Vagina (tissue), 2 donors: ENCODE measurements at regions of chr5 and their contacts with region 1.

Region 1: DNA sequence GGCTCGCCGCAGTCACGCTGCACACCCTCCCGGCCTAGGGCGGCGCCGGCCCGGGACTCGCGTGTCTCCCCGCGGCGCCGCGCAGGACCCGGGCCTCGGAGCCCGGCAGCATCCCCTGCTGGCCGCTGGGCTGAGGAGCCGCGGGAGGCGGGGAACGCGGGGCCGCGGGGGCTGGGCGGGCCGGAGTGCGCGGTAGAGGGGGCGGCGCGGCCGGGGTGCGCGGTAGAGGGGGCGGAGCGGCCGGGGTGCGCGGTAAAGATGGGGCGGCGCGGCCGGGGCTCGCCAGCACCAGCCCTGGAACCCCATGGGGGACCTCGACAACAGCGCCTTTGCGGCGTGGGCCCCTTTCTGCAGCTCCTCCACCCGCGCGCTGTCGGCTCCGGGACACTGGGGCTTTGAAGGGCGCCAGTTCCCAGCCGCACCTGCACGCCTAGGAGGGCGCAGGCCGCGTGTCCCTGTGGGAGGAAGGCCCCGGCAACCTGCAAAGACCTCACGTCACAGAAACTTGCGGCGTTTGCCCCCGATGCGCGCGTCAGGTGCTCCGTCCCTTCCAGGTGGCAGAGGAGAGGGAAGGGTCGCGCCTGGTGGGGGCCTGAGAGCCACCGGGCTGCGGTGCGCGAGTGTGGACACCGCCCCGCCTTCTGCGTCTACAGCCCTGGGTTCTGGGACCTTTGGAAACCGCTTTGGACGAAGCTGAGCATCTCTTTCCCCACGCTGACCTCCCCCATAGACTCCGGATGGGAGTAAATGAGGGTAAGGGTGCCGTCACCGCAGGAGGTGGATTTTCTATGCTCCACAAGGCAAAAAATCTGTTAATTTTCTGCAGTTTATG is 49.6 kb downstream of the NSUN2 start:
- DNase-seq: peak; percentile 62 to 70
- H3K4me3 ChIP-seq: peak overlapping the region; percentile 40 to 56
- H3K27ac ChIP-seq: no peak overlapping the region
- H3K4me1 ChIP-seq: peaks cover 15% of the 10 kb centered on the region
- H3K27me3 ChIP-seq: no peaks in the 10 kb centered on the region
- CTCF ChIP-seq: no peak
- POLR2A ChIP-seq: no peak

Region 2: DNA sequence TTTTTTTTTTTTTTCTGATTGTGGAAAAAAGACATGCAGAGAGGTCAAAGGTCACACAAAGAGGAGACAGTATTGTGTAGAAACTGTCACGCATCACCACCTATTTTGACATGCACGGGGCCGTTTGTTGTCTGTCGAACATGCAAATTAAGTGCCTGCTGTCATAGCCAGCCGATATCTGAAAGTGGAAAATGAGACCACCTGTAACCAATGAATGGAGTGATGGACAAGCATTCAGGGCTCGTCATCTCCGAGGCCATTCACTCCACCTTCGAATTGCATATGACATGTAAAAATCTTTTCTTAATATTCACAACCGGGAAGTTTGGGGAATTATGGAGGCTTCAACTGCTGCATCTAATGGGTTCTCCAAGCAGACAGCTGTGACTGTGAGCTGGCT is 1955.3 kb before region 1 on chr5:
- intact Hi-C with region 1: no loop called
- DNase-seq: no peak
- H3K4me3 ChIP-seq: no peak overlapping the region
- H3K27ac ChIP-seq: no peak overlapping the region
- H3K4me1 ChIP-seq: no peaks in the 10 kb centered on the region
- H3K27me3 ChIP-seq: no peaks in the 10 kb centered on the region
- CTCF ChIP-seq: no peak
- POLR2A ChIP-seq: no peak

Region 3: GRCh38 chr5:5497152-5497748 is 1086.0 kb before region 1 on chr5:
- intact Hi-C with region 1: loop called (anchors 5 kb)
- DNase-seq: no peak
- H3K4me3 ChIP-seq: no peak overlapping the region
- H3K27ac ChIP-seq: no peak overlapping the region
- H3K4me1 ChIP-seq: peaks cover 9% of the 10 kb centered on the region
- H3K27me3 ChIP-seq: no peaks in the 10 kb centered on the region
- CTCF ChIP-seq: peak; percentile 3 to 44 (median 36)
- POLR2A ChIP-seq: no peak

Region 4: GRCh38 chr5:6659941-6660684 is 76.8 kb after region 1 on chr5:
- intact Hi-C with region 1: no loop called
- DNase-seq: no peak
- H3K4me3 ChIP-seq: no peak overlapping the region
- H3K27ac ChIP-seq: no peak overlapping the region
- H3K4me1 ChIP-seq: no peaks in the 10 kb centered on the region
- H3K27me3 ChIP-seq: no peaks in the 10 kb centered on the region
- CTCF ChIP-seq: no peak
- POLR2A ChIP-seq: no peak